Aorta (tissue), 5 donors: ENCODE measurements at regions of chr1 and their contacts with region 1.

Region 1: DNA sequence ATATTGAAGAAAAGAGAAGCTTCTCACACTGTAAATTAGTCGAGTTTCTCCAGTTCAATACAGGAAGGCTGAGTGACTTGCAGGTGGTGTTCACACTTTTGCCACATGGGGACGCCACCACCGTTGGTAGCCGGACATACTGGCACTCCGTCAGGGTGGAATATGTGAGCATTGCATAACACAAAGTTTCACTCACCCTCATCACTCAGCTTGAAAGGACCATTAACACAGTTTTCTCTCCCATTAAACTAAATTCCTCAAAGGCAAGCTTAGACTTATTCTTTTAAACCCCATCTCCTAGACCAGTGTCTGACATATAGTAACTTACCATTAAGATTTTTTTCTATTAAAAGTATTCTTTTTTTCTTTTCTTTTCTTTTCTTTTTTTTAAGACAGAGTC is 105.3 kb upstream of the SERBP1 start:
- DNase-seq: peak; percentile 88 to 92
- ATAC-seq: peak; percentile 90
- H3K4me3 ChIP-seq: no peak overlapping the region
- H3K27ac ChIP-seq: no peak overlapping the region
- H3K4me1 ChIP-seq: no peaks in the 10 kb centered on the region
- H3K27me3 ChIP-seq: no peaks in the 10 kb centered on the region

Region 2: GRCh38 chr1:67618285-67619018 is 83.0 kb after region 1 on chr1:
- intact Hi-C with region 1: no loop called
- DNase-seq: peak; percentile 80 to 83
- ATAC-seq: peak; percentile 93
- H3K4me3 ChIP-seq: peak overlapping the region; percentile 17 to 26
- H3K27ac ChIP-seq: peak overlapping the region; percentile 84 to 95
- H3K4me1 ChIP-seq: peaks cover 0 to 12% of the 10 kb centered on the region in 2 donors
- H3K27me3 ChIP-seq: no peaks in the 10 kb centered on the region

Region 3: DNA sequence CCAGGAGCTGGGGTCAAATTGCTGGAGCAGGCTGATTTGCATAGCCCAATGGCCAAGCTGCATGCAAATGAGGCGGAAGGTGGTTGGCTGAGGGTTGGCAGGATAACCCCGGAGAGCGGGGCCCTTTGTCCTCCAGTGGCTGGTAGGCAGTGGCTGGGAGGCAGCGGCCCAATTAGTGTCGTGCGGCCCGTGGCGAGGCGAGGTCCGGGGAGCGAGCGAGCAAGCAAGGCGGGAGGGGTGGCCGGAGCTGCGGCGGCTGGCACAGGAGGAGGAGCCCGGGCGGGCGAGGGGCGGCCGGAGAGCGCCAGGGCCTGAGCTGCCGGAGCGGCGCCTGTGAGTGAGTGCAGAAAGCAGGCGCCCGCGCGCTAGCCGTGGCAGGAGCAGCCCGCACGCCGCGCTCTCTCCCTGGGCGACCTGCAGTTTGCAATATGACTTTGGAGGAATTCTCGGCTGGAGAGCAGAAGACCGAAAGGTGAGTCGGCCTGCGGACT is 149.6 kb after region 1 on chr1 and contains the start of gene GADD45A:
- intact Hi-C with region 1: loop called in 1 of 2 experiments (anchors 5 kb)
- DNase-seq: peak; percentile 99
- ATAC-seq: peak; percentile 95
- H3K4me3 ChIP-seq: peak within 1 kb of the TSS; percentile 80 to 96
- H3K27ac ChIP-seq: peak within 1 kb of the TSS; percentile 87 to 95
- H3K4me1 ChIP-seq: peaks cover 0 to 5% of the 10 kb centered on the region in 2 donors
- H3K27me3 ChIP-seq: no peaks in the 10 kb centered on the region
- total RNA-seq, gene GADD45A: 49.7 to 158 TPM

Region 4: GRCh38 chr1:67760030-67760821 is 224.8 kb after region 1 on chr1:
- intact Hi-C with region 1: loop called (anchors 2 kb)
- DNase-seq: peak in 1 of 2 donors; percentile 60
- ATAC-seq: peak; percentile 82
- H3K4me3 ChIP-seq: no peak overlapping the region
- H3K27ac ChIP-seq: peak overlapping the region in 1 of 2 donors; percentile 80
- H3K4me1 ChIP-seq: peaks cover 0 to 2% of the 10 kb centered on the region in 2 donors
- H3K27me3 ChIP-seq: no peaks in the 10 kb centered on the region

Region 5: DNA sequence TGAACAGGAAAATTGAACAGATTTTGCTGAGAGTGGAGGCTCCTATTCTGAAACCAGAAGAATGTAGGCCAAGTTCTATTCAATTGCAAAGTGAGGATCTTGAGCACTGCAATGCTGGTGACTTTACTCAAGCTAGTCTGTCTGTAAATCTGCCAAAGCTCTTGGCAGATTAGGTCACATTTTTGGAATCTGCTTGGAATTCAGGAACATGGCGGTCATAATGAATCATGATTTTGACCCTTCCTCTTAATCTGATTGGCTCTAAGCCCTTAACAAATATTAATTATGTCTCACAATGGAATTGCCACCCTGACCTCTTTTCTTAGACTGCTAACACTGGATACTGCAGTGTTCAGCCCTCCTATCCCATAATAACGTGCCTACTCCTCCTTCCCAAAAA is 305.0 kb after region 1 on chr1:
- intact Hi-C with region 1: loop called in 1 of 2 experiments (anchors 10 kb)
- DNase-seq: no peak
- ATAC-seq: peak; percentile 84
- H3K4me3 ChIP-seq: no peak overlapping the region
- H3K27ac ChIP-seq: peak overlapping the region in 1 of 2 donors; percentile 80
- H3K4me1 ChIP-seq: peaks cover 4 to 25% of the 10 kb centered on the region in 2 donors
- H3K27me3 ChIP-seq: no peaks in the 10 kb centered on the region

Region 6: DNA sequence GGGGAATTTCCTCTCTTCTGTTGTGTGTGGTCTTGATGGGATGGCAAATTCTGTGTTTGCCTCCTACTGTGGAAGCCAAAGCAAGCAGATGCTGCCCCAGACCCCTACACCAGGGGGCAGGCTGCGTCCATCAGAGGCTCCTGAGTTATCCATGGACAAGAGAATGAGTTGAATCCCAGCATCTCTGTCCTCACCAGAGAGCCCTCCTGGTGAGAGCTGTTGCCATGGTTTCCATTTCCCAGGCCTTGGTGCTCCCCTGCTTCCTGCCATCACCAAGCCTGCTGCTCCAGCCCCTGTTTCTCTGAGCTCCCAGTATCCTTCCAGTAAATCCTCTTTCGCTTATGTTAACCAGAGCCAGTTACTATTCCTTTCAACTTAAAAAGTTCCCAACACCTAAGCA is 318.2 kb after region 1 on chr1:
- intact Hi-C with region 1: loop called (anchors 5 to 10 kb)
- DNase-seq: peak; percentile 54 to 79
- ATAC-seq: no peak
- H3K4me3 ChIP-seq: no peak overlapping the region
- H3K27ac ChIP-seq: no peak overlapping the region
- H3K4me1 ChIP-seq: peaks cover 2 to 3% of the 10 kb centered on the region in 2 donors
- H3K27me3 ChIP-seq: no peaks in the 10 kb centered on the region

Region 7: DNA sequence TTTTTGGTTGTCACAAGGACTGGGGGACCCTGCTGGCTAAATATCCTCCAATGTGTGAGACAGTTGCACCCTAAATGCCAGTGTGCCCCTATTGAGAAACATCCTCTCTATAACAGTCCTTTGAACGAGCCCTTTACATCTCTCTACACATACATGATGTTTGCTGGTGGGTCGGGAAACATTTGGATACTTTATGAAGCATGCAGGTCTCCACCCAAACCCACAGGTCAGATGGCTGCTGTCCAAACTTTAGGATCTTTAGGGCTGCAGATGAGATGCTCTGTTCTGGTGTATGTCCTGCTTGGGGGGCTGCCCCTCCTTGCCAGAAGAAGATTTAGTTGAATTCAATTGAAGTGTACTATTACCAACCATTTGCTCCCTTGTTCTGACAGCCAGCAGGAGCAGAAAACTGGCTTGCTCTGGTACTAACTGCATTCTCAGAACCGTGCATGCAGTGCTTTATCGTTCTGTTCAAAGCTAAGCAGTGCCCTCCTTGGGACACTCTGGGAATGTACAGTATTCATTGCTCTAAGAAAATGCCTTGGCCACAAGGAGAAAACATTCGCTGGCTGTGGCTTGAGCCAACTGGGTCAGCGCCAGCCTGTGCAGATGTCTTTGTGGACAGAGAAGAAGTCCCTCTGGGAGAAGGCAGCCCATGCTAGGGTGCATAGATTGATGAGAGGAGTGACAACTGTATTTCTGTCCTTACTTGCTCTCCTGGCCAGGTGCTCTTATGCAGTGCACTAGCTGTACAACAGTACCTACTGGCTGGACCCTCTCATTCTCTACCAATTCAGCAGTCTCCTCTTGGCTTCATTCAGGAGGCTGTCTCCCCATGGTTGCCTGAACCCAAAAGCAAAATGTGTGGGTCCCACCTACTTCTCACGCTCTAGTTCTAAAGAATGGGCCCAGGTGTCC is 576.3 kb after region 1 on chr1:
- intact Hi-C with region 1: loop called in 1 of 2 experiments (anchors 5 kb)
- DNase-seq: peak; percentile 70 to 83
- ATAC-seq: peak; percentile 89
- H3K4me3 ChIP-seq: no peak overlapping the region
- H3K27ac ChIP-seq: no peak overlapping the region
- H3K4me1 ChIP-seq: no peaks in the 10 kb centered on the region
- H3K27me3 ChIP-seq: no peaks in the 10 kb centered on the region

Region 8: DNA sequence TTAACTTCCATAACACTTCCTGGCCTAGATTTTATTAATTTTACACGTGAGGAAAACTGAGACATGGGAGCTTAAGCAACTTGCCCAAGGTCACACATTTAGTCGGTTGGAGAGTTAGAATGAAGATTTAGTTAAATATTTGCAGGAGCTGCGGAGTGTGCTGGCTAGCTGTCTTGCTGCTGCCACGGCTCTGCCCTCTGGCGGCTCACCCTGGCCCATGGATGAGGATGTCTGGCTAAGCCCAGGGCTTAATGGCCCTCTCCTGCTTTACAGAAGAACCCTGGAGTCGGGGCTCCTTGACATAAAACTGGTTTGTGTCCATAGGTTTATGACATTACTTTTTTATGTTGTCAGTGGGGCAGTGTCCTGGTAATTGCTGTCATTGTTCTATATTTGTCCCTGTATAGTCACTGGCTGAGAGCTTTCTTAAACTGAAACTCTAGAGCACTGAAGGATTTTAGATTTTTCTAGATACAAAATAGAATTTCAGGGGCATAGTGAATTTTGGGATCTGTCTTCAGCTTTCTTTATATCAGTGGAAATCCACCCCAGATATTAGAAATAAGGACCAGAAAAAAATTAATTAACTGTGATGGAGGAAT is 785.7 kb after region 1 on chr1:
- intact Hi-C with region 1: loop called in 1 of 2 experiments (anchors 10 kb)
- DNase-seq: peak; percentile 76 to 88
- ATAC-seq: peak; percentile 84
- H3K4me3 ChIP-seq: no peak overlapping the region
- H3K27ac ChIP-seq: no peak overlapping the region
- H3K4me1 ChIP-seq: no peaks in the 10 kb centered on the region
- H3K27me3 ChIP-seq: no peaks in the 10 kb centered on the region